HepG2 (cell line): ENCODE measurements at regions of chr11 and their contacts with region 1.

Region 1: GRCh38 chr11:58579192-58580129 is 598 bp downstream of the ZFP91 start:
- DNase-seq: peak; percentile 78
- ATAC-seq: peak; percentile 76
- H3K4me3 ChIP-seq: peak overlapping the region; percentile 82 to 94 (median 84)
- H3K27ac ChIP-seq: peak overlapping the region; percentile 99
- H3K4me1 ChIP-seq: peaks cover 59% of the 10 kb centered on the region
- H3K27me3 ChIP-seq: no peaks in the 10 kb centered on the region
- CTCF ChIP-seq: peak; percentile 96
- EP300 ChIP-seq: 0 out of 4 replicates have a peak, but pooled peaks of 1 of the 2 experiments have one; percentile 22
- POLR2A ChIP-seq: peak; percentile 68 to 92
- RAD21 ChIP-seq: 0 out of 2 replicates have a peak, but pooled peaks have one; percentile 10

Region 2: GRCh38 chr11:58549644-58550043 is 29.8 kb before region 1 on chr11:
- CTCF ChIA-PET with region 1: no interaction called
- POLR2A ChIA-PET with region 1: no interaction called
- in situ Hi-C with region 1: no loop called
- intact Hi-C with region 1: no loop called
- DNase-seq: no peak
- ATAC-seq: no peak
- H3K4me3 ChIP-seq: no peak overlapping the region
- H3K27ac ChIP-seq: no peak overlapping the region
- H3K4me1 ChIP-seq: no peaks in the 10 kb centered on the region
- H3K27me3 ChIP-seq: no peaks in the 10 kb centered on the region
- CTCF ChIP-seq: no peak
- EP300 ChIP-seq: no peak
- POLR2A ChIP-seq: no peak
- RAD21 ChIP-seq: no peak

Region 3: GRCh38 chr11:58562375-58562800 is 17.1 kb before region 1 on chr11:
- CTCF ChIA-PET with region 1: interaction called, 3 read pairs
- POLR2A ChIA-PET with region 1: interaction called, 18 read pairs
- in situ Hi-C with region 1: no loop called
- intact Hi-C with region 1: no loop called
- DNase-seq: peak; percentile 47
- ATAC-seq: peak; percentile 78
- H3K4me3 ChIP-seq: no peak overlapping the region; a peak in 1 of 6 replicates
- H3K27ac ChIP-seq: peak overlapping the region; percentile 66
- H3K4me1 ChIP-seq: peaks cover 32% of the 10 kb centered on the region
- H3K27me3 ChIP-seq: no peaks in the 10 kb centered on the region
- CTCF ChIP-seq: no peak
- EP300 ChIP-seq: peak in 1 of 2 experiments; percentile 23; a peak in 1 of 4 replicates
- POLR2A ChIP-seq: no peak
- RAD21 ChIP-seq: no peak

Region 4: DNA sequence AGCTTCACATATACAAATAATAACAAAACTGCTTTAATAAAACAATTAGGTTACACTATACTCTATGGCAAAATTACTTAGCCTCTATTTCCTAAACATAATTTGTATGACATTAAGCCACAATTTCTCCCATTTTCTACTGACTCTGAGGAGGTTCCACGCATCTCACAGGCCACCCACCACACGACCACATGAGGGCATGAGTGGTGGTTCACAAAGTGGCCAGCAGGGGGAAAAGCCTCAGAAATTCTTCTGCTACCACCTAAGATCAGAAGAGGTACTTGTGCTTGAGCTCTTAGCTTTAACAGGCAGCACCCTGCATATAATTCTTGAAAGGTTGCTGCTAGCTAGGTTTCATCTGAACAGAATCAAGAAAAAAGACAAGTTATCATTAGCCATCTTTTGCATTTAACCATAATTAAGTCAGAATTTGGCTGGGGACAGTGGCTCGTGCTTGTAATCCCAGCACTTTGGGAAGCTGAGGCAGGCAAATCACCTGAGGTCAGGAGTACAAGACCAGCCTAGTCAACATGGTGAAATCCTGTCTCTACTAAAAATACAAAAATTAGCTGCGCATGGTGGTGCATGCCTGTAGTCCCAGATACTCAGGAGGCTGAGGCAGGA is 11.5 kb before region 1 on chr11:
- CTCF ChIA-PET with region 1: interaction called, 3 read pairs
- POLR2A ChIA-PET with region 1: interaction called, 18 read pairs
- in situ Hi-C with region 1: no loop called
- intact Hi-C with region 1: no loop called
- DNase-seq: peak; percentile 49
- ATAC-seq: peak; percentile 94
- H3K4me3 ChIP-seq: no peak overlapping the region
- H3K27ac ChIP-seq: no peak overlapping the region
- H3K4me1 ChIP-seq: peaks cover 8% of the 10 kb centered on the region
- H3K27me3 ChIP-seq: no peaks in the 10 kb centered on the region
- CTCF ChIP-seq: peak; percentile 67
- EP300 ChIP-seq: no peak
- POLR2A ChIP-seq: no peak
- RAD21 ChIP-seq: 0 out of 2 replicates have a peak, but pooled peaks have one; percentile 18

Region 5: DNA sequence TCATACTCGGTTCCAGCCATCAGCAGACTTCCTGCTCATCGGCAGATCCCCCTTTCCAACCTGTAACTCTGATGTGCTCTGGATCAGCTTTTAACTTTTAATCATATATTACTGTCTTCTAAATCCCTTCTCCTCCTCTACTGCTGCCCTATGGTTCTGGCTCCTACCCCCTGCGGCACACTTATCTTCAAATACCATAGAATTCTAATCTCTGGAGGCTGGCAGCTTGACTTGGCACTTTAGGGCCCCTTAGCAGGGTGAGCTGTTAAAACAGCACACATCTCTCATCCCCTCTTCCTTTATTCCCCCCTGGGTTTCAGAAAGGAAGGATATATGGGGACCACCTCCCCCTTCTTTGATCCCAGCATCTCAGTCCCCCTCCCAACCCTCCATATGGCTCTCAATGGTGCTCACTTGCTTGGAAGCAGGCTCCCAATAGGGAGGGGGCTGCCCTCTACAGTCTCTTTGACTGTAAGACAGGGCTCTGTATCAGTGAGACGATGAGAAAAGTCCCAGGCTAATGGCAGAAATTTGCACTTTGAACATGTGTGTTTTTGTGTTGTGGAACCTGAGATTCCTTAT is 38.6 kb after region 1 on chr11:
- CTCF ChIA-PET with region 1: no interaction called
- POLR2A ChIA-PET with region 1: no interaction called
- in situ Hi-C with region 1: no loop called
- intact Hi-C with region 1: loop called (anchors 1 kb)
- DNase-seq: peak; percentile 21
- ATAC-seq: peak; percentile 96
- H3K4me3 ChIP-seq: no peak overlapping the region
- H3K27ac ChIP-seq: no peak overlapping the region
- H3K4me1 ChIP-seq: no peaks in the 10 kb centered on the region
- H3K27me3 ChIP-seq: no peaks in the 10 kb centered on the region
- CTCF ChIP-seq: peak; percentile 42
- EP300 ChIP-seq: no peak
- POLR2A ChIP-seq: no peak
- RAD21 ChIP-seq: no peak

Region 6: DNA sequence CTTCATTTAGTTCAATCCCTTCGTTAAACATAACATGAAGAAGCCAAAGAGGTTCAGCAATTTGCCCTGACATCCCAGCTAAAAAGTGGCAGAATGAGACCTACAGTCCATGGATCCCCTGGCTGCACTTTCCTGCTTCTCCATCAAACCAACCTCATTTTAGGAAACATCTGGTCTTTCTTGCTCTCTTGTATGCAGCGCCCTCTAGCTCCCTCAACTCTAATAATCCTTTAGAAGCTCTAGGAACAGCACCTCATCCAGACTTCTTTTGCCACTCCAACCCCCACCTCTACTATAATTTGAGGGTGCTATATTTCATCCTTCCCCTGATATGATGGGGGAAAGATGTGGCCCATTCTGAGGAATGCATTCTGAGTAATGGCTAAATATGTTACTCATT is 50.4 kb after region 1 on chr11:
- CTCF ChIA-PET with region 1: no interaction called
- POLR2A ChIA-PET with region 1: no interaction called
- in situ Hi-C with region 1: no loop called
- intact Hi-C with region 1: loop called (anchors 1 kb)
- DNase-seq: peak; percentile 60
- ATAC-seq: peak; percentile 78
- H3K4me3 ChIP-seq: no peak overlapping the region
- H3K27ac ChIP-seq: no peak overlapping the region
- H3K4me1 ChIP-seq: no peaks in the 10 kb centered on the region
- H3K27me3 ChIP-seq: no peaks in the 10 kb centered on the region
- CTCF ChIP-seq: peak; percentile 69
- EP300 ChIP-seq: no peak
- POLR2A ChIP-seq: no peak
- RAD21 ChIP-seq: no peak

Region 7: GRCh38 chr11:58788355-58789023 is 209.0 kb after region 1 on chr11:
- CTCF ChIA-PET with region 1: interaction called, 4 read pairs
- POLR2A ChIA-PET with region 1: no interaction called
- in situ Hi-C with region 1: loop called (anchors 10 kb)
- intact Hi-C with region 1: no loop called
- DNase-seq: peak; percentile 67
- ATAC-seq: peak; percentile 98
- H3K4me3 ChIP-seq: no peak overlapping the region
- H3K27ac ChIP-seq: no peak overlapping the region
- H3K4me1 ChIP-seq: peaks cover 7% of the 10 kb centered on the region
- H3K27me3 ChIP-seq: no peaks in the 10 kb centered on the region
- CTCF ChIP-seq: peak; percentile 92
- EP300 ChIP-seq: no peak
- POLR2A ChIP-seq: no peak
- RAD21 ChIP-seq: peak; percentile 85